ENCODE measurements at regions of chr19 and their contacts with region 1.

Region 1: DNA sequence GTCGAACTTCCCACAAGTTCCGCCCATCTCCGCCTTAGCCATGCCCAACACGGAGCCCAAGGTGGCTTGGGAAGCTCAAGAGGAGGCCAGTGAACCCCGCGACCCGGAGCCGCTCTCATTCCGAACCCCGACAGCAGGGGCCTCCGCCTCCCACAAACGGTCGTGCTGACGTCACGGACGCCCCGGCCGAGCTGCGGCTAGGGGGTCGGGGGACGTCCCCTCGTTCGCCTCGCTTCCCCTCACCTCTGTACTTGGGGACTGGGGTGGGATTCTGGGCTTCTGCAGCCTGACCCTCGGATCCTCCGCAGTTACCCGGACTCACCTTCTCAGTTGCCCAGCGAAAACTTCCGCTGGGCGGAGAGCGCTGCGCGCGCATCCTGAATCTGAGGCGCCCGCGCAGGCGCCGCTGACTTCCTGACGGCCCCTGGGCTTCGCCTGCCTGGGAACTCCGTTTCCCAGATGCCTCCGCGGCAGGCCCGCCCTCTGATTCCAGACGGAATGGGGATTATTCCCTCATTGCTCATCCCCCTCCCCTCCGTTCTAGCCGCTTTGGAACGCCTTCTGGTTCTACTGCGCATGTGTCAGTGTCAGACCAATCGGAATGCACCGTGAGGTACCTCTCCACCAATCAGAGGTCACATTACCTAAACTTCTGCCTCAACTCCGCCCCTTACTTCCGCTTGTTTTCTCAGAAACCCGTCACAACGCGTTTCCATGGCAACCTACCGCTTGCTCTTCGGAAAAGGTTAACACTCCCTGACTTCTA is at the start of gene VRK3:
- DNase-seq: peak; percentile 99
- H3K4me3 Mint-ChIP-seq: peak within 1 kb of the TSS; percentile 95
- H3K27ac Mint-ChIP-seq: peak within 1 kb of the TSS; percentile 97
- H3K4me1 Mint-ChIP-seq: peaks cover 50% of the 10 kb centered on the region
- H3K27me3 Mint-ChIP-seq: no peaks in the 10 kb centered on the region
- total RNA-seq, gene VRK3: 45.7 to 54.3 TPM

Region 2: DNA sequence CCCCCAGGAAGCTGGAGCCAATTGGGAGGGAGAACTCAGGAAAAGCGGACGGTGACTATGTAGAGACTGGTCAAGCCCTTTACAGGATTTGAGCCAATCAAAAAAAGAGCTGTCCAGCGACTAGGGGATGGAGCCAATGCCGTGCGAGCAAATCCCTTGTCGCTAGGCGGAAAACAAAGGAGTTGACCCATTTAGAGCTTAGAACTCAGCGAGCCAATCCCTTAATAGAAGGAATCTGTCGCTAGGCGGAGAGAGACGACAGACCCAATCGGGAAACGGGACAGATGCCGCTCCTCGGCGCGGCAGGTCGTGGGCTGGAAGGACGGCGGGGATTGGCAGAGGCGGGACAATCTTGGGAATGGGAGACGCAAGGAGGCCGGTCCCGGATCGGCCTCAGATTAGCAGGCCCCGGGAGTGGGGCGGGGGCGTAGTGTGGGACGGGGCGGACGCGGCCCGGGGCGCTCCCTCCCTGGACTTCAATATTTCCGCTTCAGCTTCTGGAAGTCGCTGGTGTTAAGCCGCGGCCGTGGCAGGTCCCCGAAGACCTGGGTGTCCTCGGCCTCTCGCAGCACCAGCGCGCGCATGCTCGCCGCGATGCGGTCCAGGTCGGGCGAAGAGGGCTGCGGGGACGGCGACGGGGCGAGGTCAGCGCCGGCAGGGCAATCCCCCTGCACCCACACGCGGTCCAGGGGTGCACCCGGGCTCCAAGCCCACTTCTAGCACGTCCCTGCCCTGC is 155.6 kb before region 1 on chr19:
- CTCF ChIA-PET with region 1: no interaction called
- intact Hi-C with region 1: loop called (anchors 2 kb)
- DNase-seq: peak; percentile 95
- H3K4me3 Mint-ChIP-seq: no peak overlapping the region
- H3K27ac Mint-ChIP-seq: no peak overlapping the region
- H3K4me1 Mint-ChIP-seq: peaks cover 47% of the 10 kb centered on the region
- H3K27me3 Mint-ChIP-seq: no peaks in the 10 kb centered on the region

Region 3: DNA sequence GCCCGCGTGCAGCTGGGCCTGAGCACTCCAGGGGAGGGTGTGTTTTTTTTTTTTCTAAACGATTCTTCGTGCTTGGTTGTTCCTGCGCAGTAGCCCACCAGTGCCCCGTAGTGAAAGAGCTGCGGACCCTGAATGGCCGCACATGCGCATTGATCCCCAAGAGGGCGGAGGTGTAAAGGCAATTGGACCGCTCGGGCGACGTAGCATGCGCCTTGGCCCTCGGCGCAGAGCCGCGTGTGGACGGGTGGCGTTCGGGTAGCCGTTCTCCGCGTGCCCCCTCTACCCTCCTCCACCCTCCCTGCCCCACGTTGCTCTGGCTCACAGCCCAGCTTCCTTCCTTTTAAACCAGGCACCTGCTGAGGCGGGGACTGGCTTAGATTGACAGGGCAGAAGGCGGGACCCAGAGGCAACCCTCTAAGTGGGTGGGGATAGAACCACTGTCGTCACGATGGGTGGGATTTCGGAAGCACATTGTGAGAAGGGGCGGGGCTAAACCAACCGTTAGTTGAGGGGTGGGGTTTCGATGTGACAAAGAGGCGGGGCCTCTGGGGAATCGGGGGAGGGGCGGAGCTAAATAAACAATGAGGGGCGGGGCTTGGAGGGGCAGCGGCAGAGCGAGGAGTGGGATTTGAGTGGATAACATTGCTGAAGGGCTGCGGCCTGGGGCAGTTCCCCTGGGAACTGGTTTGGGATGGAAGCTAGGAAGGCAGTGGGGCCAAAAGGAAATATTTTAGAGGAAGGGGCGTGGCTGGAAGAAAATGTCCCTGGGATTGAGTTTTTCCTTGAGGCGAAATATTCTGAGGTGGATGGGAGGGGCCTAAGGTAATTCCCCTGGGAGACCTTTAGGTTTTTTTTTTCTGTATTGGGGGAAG is 95.4 kb before region 1 on chr19:
- CTCF ChIA-PET with region 1: no interaction called
- intact Hi-C with region 1: loop called (anchors 1 kb)
- DNase-seq: peak; percentile 97
- H3K4me3 Mint-ChIP-seq: peak overlapping the region; percentile 89
- H3K27ac Mint-ChIP-seq: peak overlapping the region; percentile 100
- H3K4me1 Mint-ChIP-seq: peaks cover 60% of the 10 kb centered on the region
- H3K27me3 Mint-ChIP-seq: no peaks in the 10 kb centered on the region

Region 4: DNA sequence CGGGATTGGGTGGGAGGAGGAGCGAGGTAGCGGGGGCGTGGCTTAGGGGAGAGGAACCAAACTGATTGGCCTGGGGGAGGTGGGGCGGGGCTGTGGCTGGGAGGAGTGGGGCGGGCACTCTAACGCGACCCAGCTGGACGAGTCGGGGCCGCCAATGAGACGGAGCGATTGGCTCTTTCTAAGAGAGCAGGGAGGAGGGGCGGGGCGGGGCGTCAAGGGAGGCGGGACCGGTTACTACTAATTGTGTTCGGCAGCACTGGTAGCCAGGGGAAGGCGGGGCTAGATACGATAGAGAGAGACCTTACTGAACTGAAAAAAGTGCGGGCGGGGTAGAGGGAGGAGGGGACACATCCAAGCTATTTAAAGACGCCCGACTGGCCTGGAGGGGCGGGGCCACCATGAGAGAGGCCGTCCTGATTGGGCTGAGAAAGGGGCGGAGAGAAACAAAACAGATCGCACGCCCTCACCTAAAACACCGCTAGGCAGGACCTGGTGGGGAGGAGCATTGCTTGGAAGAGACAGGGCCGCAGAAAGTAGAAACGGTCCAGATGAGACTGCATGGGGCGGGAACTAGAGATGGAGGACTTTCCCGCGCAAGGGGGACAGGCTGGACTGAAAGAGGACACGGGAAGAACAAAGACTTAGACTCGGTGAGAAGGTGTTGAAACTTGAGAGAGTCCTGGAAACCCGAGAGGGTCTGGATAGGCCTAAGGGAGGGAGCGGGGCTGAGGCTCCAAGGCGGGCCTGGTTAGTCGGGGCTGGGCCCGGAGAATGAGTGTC is 304.1 kb after region 1 on chr19 and contains the start of gene KCNC3:
- CTCF ChIA-PET with region 1: no interaction called
- intact Hi-C with region 1: loop called (anchors 5 kb)
- DNase-seq: peak; percentile 98
- H3K4me3 Mint-ChIP-seq: peak within 1 kb of the TSS; percentile 82
- H3K27ac Mint-ChIP-seq: peak within 1 kb of the TSS; percentile 83
- H3K4me1 Mint-ChIP-seq: peaks cover 65% of the 10 kb centered on the region
- H3K27me3 Mint-ChIP-seq: peaks cover 45% of the 10 kb centered on the region
- total RNA-seq, gene KCNC3: 2.0 to 2.4 TPM

Region 5: DNA sequence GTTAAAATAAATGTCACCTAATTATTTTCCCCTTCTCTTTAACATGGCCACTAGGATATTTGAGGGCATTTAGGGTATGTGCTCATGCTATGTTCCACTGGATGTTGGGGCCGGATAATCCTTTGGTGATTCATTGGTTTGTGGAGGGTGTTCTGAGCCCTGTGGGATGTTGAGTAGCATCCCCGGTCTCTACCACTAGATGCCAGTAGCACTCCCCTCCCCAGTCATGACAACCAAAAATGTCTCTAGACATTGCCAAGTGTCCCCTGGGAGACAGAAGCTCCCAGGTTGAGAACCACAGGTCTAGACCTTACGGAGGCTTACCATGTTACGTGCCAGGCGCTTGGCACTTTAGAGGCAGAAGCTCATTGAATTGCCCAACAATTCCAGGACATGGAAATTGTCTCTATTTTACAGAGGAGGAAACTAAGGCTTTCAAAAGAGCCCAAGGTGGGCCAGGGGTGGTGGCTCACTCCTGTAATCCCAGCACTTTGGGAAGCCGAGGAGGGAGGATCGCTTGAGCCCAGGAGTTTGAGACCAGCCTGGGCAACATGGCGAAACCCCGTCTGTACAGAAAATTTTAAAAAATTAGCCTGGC is 680.3 kb after region 1 on chr19:
- CTCF ChIA-PET with region 1: no interaction called
- intact Hi-C with region 1: no loop called
- DNase-seq: peak; percentile 58
- H3K4me3 Mint-ChIP-seq: no peak overlapping the region
- H3K27ac Mint-ChIP-seq: no peak overlapping the region
- H3K4me1 Mint-ChIP-seq: no peaks in the 10 kb centered on the region
- H3K27me3 Mint-ChIP-seq: peaks cover 36% of the 10 kb centered on the region